Left colon (tissue), 2 donors: ENCODE measurements at regions of chr11 and their contacts with region 1.

Region 1: GRCh38 chr11:67507864-67508485 is at the start of gene CDK2AP2:
- DNase-seq: peak; percentile 99 to 100
- ATAC-seq: peak; percentile 63
- total RNA-seq, gene CDK2AP2: 79.5 to 86.2 TPM

Region 2: DNA sequence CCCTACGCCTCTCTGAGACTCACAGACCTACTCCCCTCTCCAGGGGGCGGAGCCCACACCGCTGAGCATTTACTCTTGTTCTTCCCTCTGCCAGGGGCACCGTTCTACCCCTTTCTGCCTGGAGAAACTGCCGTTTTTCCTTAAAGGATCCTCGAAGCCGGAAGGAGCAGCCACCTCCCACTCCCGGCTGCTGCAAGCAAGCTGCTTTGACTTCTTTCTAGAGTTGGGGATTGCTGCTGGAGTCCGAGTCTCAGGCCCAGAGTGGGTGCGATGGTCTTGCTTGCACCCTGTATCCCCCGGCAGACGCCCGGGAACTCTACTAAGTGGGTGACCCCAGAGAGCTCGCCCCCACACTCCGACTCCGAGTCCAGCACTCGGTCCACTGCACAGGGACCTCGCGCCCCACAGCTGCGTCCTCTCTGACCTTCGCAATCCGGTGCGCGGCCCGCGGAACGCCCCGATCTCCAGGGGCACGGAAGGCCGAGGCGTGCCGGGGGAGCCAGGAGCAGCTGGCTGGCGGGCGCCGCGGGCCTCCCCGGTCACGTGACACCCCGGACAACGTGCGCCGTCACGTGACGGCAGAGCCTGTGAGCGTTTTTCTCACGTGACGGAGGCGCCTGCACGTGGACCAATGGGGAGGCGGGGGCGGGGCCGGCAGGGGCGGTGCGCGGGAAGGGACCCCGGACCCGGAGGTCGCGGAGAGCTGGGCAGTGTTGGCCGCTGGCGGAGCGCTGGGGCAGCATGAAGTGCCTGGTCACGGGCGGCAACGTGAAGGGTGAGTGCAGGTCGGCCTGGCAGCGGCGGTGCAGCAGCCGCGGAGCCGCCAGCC is 116.5 kb before region 1 on chr11 and contains the start of gene RAD9A:
- intact Hi-C with region 1: loop called in 1 of 2 experiments (anchors 10 kb)
- DNase-seq: peak; percentile 96 to 98
- ATAC-seq: peak; percentile 84
- total RNA-seq, gene RAD9A: 27.4 to 40.6 TPM